Activated CD4-positive, alpha-beta memory T cell treated with anti-CD3 and anti-CD28 coated beads for 36 hours (primary cell): ENCODE measurements at regions of chrX and their contacts with region 1.

Region 1: GRCh38 chrX:4550018-4550417 is 836.6 kb upstream of the PRKX start:
- DNase-seq: no peak
- H3K4me3 Mint-ChIP-seq: no peak overlapping the region
- H3K27ac Mint-ChIP-seq: no peak overlapping the region
- H3K4me1 Mint-ChIP-seq: no peaks in the 10 kb centered on the region
- H3K27me3 Mint-ChIP-seq: no peaks in the 10 kb centered on the region

Region 2: DNA sequence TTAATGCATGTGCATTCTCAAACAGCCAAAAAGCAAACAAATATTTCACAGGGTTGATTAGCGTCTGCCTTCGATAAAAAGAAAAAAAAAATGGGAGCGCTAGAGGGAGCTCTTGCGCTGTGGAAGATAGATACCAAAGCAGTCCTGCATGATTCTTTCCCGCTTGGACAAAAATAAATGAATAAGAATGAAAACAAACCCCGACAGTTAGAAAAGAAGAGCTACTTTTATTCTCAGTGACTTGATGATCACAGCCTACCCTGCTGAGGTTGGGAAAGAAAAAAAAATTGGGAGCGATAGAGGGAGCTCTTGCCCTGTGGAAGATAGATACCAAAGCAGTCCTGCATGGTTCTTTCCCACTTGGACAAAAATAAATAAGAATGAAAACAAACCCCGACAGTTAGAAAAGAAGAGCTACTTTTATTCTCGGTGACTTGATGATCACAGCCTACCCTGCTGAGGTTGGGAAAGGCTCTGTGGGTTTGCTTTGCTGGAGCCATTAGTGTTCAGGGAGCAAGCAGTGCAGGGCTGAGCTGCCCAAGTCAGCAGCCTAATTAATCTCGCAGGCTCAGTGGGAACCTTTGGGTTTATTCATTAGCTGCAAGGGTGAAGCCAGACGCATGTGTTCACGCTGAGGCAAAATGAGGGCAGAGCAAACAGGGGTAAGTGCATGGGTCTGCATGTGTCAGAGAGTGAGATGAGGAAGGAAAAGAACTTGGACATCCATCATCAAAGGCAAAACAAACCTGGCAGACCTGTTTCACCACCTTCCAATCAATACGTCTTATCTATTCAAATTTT is 587.3 kb before region 1 on chrX:
- CTCF ChIA-PET with region 1: no interaction called
- POLR2A ChIA-PET with region 1: no interaction called
- intact Hi-C with region 1: loop called (anchors 5 kb)
- DNase-seq: no peak
- H3K4me3 Mint-ChIP-seq: no peak overlapping the region
- H3K27ac Mint-ChIP-seq: no peak overlapping the region
- H3K4me1 Mint-ChIP-seq: no peaks in the 10 kb centered on the region
- H3K27me3 Mint-ChIP-seq: peaks cover 1% of the 10 kb centered on the region

Region 3: GRCh38 chrX:5290635-5291034 is 740.6 kb after region 1 on chrX:
- CTCF ChIA-PET with region 1: no interaction called
- POLR2A ChIA-PET with region 1: no interaction called
- intact Hi-C with region 1: no loop called
- DNase-seq: no peak
- H3K4me3 Mint-ChIP-seq: no peak overlapping the region
- H3K27ac Mint-ChIP-seq: no peak overlapping the region
- H3K4me1 Mint-ChIP-seq: no peaks in the 10 kb centered on the region
- H3K27me3 Mint-ChIP-seq: no peaks in the 10 kb centered on the region